Upper lobe of right lung (tissue), 1 donor: ENCODE measurements at regions of chr1 and their contacts with region 1.

Region 1: GRCh38 chr1:65067491-65068201 is 80.4 kb upstream of the AK4 start:
- DNase-seq: peak; percentile 83
- ATAC-seq: peak; percentile 49
- H3K4me3 ChIP-seq: peak overlapping the region; percentile 89
- H3K27ac ChIP-seq: peak overlapping the region; percentile 100
- H3K4me1 ChIP-seq: peaks cover 32% of the 10 kb centered on the region
- H3K27me3 ChIP-seq: no peaks in the 10 kb centered on the region
- CTCF ChIP-seq: no peak

Region 2: DNA sequence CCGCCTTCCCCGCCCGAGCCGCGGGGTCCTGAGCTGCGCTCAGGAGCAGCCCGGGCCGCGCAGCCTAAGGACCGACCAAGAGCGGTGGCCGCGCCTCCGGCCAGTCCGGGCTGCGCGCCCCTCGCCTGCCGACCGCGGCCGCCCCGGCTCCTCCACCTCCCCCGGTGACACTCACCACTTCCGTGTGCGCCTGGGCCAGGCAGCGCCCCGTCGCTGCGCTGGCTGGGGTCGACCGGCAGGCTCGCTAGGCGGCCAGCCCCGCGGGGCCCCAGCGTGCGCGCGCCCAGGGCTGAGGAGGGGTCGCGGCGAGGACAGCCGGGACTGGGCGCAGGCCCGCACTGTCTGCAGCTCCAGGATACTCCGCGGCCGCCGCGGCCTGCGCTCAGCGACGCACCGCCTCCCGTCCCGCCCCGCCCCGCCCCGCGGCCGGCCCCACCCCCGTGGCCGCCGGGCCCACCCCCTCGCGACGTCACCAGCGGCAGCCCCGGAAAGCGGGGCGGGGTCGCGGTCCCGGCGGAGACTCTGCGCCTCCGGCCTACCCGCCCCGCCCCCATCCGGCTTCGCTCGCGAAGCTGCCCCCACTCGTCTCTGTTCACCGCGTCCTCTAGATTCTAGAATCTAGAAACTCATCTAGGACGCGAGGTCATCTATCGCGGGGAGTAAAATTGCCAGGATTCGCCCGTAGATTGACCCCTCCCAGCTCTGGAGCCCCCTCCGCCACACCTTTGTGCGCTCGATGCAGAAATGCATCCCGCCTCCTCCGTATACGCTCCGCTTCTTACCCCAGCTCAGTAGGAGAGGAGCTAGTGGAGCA is 101.3 kb before region 1 on chr1 and contains the start of gene JAK1:
- intact Hi-C with region 1: loop called (anchors 10 kb)
- DNase-seq: peak; percentile 94
- ATAC-seq: peak; percentile 96
- H3K4me3 ChIP-seq: peak within 1 kb of the TSS; percentile 66
- H3K27ac ChIP-seq: peak within 1 kb of the TSS; percentile 94
- H3K4me1 ChIP-seq: peaks cover 35% of the 10 kb centered on the region
- H3K27me3 ChIP-seq: no peaks in the 10 kb centered on the region
- CTCF ChIP-seq: no peak
- total RNA-seq, gene JAK1: 152 TPM

Region 3: GRCh38 chr1:65020774-65021173 is 46.9 kb before region 1 on chr1:
- intact Hi-C with region 1: no loop called
- DNase-seq: no peak
- ATAC-seq: peak; percentile 57
- H3K4me3 ChIP-seq: no peak overlapping the region
- H3K27ac ChIP-seq: no peak overlapping the region
- H3K4me1 ChIP-seq: no peaks in the 10 kb centered on the region
- H3K27me3 ChIP-seq: no peaks in the 10 kb centered on the region
- CTCF ChIP-seq: peak; percentile 41